ENCODE measurements at regions of chr3 and their contacts with region 1.

Region 1: DNA sequence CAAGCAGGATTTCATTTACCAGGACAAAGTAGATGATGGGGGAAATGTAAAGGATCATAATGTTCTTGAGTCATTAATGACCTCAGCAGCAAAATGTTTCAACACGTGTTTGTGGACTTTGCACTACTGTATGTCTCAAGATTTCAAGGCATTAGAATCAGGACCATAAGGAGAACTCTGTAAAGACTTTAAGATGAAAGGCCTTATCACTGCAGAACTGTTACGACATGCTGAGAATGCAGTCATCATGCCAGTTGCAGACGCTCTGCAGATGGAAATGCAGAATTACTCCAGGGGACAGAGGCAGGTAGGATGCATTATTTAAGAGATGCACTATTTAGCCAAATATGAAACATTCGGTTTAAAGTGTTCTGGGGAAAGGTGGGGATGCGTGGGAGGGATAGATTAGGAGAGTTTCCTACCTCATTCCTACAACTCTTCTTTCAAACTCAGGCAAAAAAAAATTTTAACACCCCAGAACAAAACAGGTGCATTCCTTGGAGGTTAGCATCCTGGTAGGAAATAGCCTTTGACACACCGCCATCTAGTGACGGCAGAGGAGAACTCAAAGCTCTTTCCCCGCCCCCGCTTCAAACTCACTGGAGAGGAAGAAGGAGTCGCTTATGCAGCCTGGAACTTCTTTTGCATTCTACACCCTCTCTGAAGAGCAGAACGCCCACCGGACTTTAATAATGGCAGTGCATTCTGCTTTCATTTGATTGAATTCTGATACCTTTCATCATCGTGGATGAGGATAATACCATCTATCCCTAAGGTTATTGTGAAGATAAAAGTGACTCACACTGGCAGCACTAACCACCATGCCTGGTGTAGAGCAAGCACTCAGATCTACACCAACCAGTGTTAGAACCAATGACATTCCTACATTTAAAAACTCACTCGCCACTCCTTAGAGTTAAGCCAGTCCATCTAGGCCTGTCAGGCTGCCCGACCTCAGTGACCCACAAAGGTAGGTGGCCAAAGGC is 43.1 kb upstream of the TOPAZ1 start:
- DNase-seq: peak in 2 of 3 donors; percentile 57 to 82
- ATAC-seq: peak; percentile 90
- H3K4me3 ChIP-seq: no peak overlapping the region
- H3K4me1 ChIP-seq: no peaks in the 10 kb centered on the region
- CTCF ChIP-seq: peak; percentile 63

Region 2: GRCh38 chr3:43531835-43532234 is 666.7 kb before region 1 on chr3:
- intact Hi-C with region 1: loop called in 1 of 2 experiments (anchors 10 kb)
- DNase-seq: no peak
- ATAC-seq: no peak
- H3K4me3 ChIP-seq: no peak overlapping the region
- H3K4me1 ChIP-seq: no peaks in the 10 kb centered on the region
- CTCF ChIP-seq: no peak

Measured in mucosa of descending colon (tissue), 3 donors.